ENCODE measurements at regions of chr6 and their contacts with region 1.

Region 1: GRCh38 chr6:35522660-35523658 is 10.3 kb upstream of the TULP1 start:
- DNase-seq: peak; percentile 72
- H3K4me3 ChIP-seq: peak overlapping the region in 2 of 3 experiments; percentile 33 to 46
- H3K27ac ChIP-seq: no peak overlapping the region
- H3K4me1 ChIP-seq: no peaks in the 10 kb centered on the region
- H3K27me3 ChIP-seq: no peaks in the 10 kb centered on the region
- CTCF ChIP-seq: peak; percentile 80 to 93
- POLR2A ChIP-seq: no peak

Region 2: DNA sequence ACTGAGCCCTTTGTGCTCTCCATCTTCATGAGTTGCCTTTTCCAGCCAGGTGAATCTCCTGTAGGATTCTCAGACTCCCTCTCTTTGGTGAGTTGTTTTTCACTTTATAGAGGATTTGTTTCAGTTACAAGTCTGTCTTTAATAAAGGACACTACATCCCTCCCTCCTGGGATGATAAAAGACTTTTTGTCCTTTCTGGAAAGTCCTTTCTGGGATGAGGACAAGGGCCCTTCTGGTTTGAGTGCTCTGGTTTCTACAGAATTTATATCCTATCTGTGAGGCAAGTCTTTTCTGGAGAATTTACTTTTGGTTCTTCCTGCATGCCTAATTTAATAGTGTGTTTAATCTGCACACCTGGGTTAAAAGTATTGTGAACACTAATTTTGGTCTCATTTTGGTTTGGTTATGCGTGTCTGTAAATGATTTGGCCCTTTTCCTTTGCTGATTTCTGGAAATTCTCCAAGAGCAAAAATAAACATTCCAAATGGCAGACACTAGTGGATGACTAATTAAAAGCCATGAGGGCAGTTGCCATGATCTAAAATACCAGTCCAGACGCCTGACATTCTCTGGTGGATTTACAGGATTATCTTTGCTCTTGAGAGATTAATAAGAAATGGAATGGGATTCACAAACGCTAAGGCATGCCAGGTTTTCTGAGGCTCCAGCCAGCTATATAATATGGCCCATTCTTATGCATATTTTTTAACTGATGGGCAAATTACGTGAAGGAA is 426.7 kb before region 1 on chr6:
- CTCF ChIA-PET with region 1: no interaction called
- POLR2A ChIA-PET with region 1: no interaction called
- dilution Hi-C with region 1: no loop called
- intact Hi-C with region 1: no loop called
- DNase-seq: peak; percentile 84
- H3K4me3 ChIP-seq: no peak overlapping the region
- H3K27ac ChIP-seq: peak overlapping the region; percentile 42
- H3K4me1 ChIP-seq: peaks cover 12% of the 10 kb centered on the region
- H3K27me3 ChIP-seq: no peaks in the 10 kb centered on the region
- CTCF ChIP-seq: no peak
- POLR2A ChIP-seq: no peak

Region 3: GRCh38 chr6:35534407-35535170 is 11.6 kb after region 1 on chr6:
- CTCF ChIA-PET with region 1: interaction called, 17 read pairs
- POLR2A ChIA-PET with region 1: no interaction called
- dilution Hi-C with region 1: no loop called
- intact Hi-C with region 1: no loop called
- DNase-seq: no peak
- H3K4me3 ChIP-seq: no peak overlapping the region
- H3K27ac ChIP-seq: no peak overlapping the region
- H3K4me1 ChIP-seq: no peaks in the 10 kb centered on the region
- H3K27me3 ChIP-seq: peaks cover 2 to 12% of the 10 kb centered on the region in 2 experiments
- CTCF ChIP-seq: no peak
- POLR2A ChIP-seq: no peak

Region 4: DNA sequence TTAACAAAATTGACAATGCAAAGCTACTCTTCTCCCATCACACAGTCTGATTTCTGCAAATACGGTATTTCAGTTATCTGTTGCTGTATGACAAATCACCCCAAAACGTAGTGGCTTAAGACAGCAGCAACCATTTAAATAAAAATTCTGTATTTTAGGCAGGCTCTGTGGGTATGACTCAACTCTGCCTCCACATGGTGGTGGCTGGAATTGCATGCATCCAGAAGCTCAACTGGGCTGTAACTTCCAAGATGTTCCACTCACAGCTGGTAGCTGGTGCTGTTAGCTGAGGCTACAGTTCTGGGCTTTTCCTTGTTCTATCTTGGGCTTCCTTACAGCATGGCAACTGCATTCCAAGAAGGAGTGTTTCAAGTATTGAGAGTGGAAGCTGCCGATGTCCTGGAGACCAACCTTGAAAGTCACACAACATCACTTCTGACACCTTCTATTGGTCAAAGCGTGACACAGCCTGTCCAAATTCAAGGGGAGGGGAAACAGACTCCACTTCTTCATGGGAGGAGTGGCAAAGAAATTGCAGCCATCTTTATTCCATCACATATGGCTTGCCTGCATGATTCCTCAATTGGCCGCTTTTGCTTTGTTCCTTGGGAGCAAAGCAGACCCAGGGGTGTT is 29.4 kb after region 1 on chr6:
- CTCF ChIA-PET with region 1: interaction called, 85 read pairs
- POLR2A ChIA-PET with region 1: no interaction called
- dilution Hi-C with region 1: no loop called
- intact Hi-C with region 1: loop called (anchors 1 kb)
- DNase-seq: peak; percentile 44
- H3K4me3 ChIP-seq: no peak overlapping the region
- H3K27ac ChIP-seq: no peak overlapping the region
- H3K4me1 ChIP-seq: no peaks in the 10 kb centered on the region
- H3K27me3 ChIP-seq: peaks cover 4 to 7% of the 10 kb centered on the region in 2 experiments
- CTCF ChIP-seq: peak; percentile 80 to 90
- POLR2A ChIP-seq: no peak

Region 5: GRCh38 chr6:35569011-35569461 is 46.1 kb after region 1 on chr6:
- CTCF ChIA-PET with region 1: interaction called, 8 read pairs
- POLR2A ChIA-PET with region 1: no interaction called
- dilution Hi-C with region 1: no loop called
- intact Hi-C with region 1: loop called (anchors 5 kb)
- DNase-seq: no peak
- H3K4me3 ChIP-seq: no peak overlapping the region
- H3K27ac ChIP-seq: no peak overlapping the region
- H3K4me1 ChIP-seq: no peaks in the 10 kb centered on the region
- H3K27me3 ChIP-seq: peaks cover 12% of the 10 kb centered on the region in 2 experiments
- CTCF ChIP-seq: peak; percentile 44 to 68
- POLR2A ChIP-seq: no peak

Region 6: DNA sequence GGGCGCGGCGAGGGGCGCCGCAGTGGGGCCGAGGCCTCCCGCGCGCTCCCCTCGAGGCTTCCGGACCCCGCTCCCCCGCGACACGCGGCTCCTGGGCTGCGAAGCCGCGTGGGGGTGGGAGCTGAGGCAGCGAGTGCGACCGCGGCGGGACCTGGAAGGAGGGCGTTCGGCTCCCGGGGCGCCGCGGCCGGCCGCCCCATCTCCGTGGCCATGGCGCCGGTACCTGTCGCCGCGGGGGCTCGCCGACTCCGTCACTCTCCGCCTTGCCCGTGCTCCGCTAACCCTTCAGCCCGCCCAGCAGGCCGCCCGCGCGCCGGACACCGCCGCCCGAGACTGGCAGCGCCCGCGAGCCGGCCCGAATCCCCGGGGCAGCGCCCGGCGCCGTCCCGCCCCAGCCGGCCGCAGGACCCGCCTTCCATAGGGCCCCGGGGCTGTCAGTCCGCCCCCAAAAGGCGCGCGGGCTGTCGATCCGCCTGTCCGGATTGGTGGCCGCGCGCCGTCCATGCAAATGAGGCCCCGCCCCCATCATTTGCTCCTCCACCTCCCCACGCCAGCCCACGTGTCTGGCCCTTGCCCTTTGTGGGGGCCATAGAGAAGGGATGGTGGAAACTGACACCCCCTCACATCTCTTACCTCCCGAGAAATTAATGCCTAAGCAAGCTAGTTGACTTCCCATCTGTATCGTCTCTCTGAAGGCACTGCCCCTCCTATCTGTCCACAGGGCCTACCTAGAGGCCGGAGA is 165.8 kb after region 1 on chr6 and contains the start of gene FKBP5:
- CTCF ChIA-PET with region 1: interaction called, 4 read pairs
- POLR2A ChIA-PET with region 1: no interaction called
- dilution Hi-C with region 1: no loop called
- intact Hi-C with region 1: loop called (anchors 2 kb)
- DNase-seq: peak; percentile 89
- H3K4me3 ChIP-seq: peak within 1 kb of the TSS; percentile 55 to 91 (median 56)
- H3K27ac ChIP-seq: peak within 1 kb of the TSS; percentile 79
- H3K4me1 ChIP-seq: peaks cover 10% of the 10 kb centered on the region
- H3K27me3 ChIP-seq: no peaks in the 10 kb centered on the region
- CTCF ChIP-seq: no peak
- POLR2A ChIP-seq: peak; percentile 92
- total RNA-seq, gene FKBP5: 56.8 and 70.6 TPM in 2 replicates

Region 7: DNA sequence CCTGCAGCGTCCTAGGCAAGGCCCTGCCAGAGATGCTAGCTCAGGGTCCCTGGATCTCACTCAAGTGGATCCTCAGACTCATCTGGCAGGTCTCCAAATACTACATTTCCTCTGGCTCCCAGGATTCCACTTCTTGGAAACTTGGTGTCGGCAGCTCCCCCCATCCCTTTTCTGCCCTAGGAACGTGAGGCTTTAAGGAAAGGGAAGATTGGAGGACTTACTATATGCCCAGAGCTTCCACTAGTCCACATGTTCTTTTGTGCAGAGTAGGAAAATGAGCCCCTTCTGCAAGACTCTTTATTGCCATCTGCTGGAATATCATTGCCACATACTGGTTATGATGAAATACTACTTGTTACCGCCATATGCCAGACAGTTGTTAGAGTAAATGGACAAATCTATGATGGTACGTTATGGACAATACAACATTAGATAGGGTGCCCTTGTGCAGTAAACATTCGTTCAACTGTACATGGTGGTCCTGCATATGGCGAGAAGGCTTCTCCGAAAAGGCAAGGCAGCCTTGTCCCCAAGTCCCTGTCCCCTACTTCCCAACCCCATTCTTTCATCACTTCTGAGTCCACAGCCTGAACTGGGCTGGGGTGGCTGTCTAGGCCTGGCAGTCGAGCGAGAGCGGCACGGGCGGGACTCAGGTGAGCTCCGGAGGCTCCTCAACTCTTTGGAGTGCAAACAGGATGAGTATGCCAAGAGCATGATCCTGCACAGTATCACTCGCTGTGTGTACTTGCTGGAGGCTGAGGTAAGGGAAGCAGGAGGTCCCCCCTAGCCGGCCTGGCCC is 214.7 kb after region 1 on chr6:
- CTCF ChIA-PET with region 1: interaction called, 252 read pairs
- POLR2A ChIA-PET with region 1: interaction called, 3 read pairs
- dilution Hi-C with region 1: no loop called
- intact Hi-C with region 1: loop called (anchors 1 kb)
- DNase-seq: peak; percentile 77
- H3K4me3 ChIP-seq: no peak overlapping the region
- H3K27ac ChIP-seq: no peak overlapping the region
- H3K4me1 ChIP-seq: peaks cover 8% of the 10 kb centered on the region
- H3K27me3 ChIP-seq: no peaks in the 10 kb centered on the region
- CTCF ChIP-seq: peak; percentile 60 to 67
- POLR2A ChIP-seq: no peak

Region 8: DNA sequence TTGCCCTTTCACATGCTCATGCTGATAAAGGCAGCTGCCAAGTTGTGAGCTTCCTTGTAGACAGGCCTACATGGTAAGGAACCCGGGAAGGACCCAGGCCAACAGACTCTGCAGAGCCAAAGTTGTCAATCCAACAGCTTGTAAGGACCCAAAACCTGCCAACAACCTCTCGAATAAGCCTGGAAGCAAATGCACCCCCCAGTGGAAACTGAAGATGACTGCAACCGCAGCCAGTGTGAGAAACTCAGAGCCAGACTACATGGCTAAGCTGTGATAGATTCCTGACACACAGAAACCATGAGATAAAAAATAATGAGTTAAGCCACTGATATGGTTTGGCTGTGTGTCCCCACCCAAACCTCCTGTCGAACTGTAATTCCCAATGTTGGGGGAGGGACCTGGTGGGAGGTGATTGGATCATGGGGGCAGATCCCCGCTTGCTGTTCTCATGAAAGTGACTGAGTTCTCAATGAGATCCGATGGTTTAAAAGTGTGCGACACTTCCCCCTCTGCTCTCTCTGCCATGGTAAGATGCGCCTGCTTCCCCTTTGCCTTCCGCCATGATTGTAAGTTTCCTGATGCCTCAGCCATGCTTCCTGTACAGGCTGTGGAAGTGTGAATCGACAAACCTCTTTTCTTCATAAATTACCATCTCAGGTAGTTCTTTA is 234.6 kb after region 1 on chr6:
- CTCF ChIA-PET with region 1: interaction called, 16 read pairs
- POLR2A ChIA-PET with region 1: no interaction called
- dilution Hi-C with region 1: no loop called
- intact Hi-C with region 1: no loop called
- DNase-seq: peak; percentile 32
- H3K4me3 ChIP-seq: no peak overlapping the region
- H3K27ac ChIP-seq: no peak overlapping the region
- H3K4me1 ChIP-seq: no peaks in the 10 kb centered on the region
- H3K27me3 ChIP-seq: peaks cover 0 to 10% of the 10 kb centered on the region in 2 experiments
- CTCF ChIP-seq: peak; percentile 20 to 55
- POLR2A ChIP-seq: no peak

Region 9: GRCh38 chr6:36248980-36249379 is 726.0 kb after region 1 on chr6:
- CTCF ChIA-PET with region 1: no interaction called
- POLR2A ChIA-PET with region 1: no interaction called
- dilution Hi-C with region 1: no loop called
- intact Hi-C with region 1: no loop called
- DNase-seq: peak; percentile 84
- H3K4me3 ChIP-seq: no peak overlapping the region
- H3K27ac ChIP-seq: peak overlapping the region; percentile 79
- H3K4me1 ChIP-seq: peaks cover 46% of the 10 kb centered on the region
- H3K27me3 ChIP-seq: no peaks in the 10 kb centered on the region
- CTCF ChIP-seq: peak in 1 of 2 donors; percentile 19
- POLR2A ChIP-seq: peak; percentile 56

Measured in endothelial cell of umbilical vein (primary cell).